Activated T-helper 2 cell treated with anti-CD3 and anti-CD28 coated beads, Interferon-gamma antibody, Interleukin-2, Interleukin-4, amounts not matched to agents 10 μg/mL and 5 μg/mL and 100 μg/mL, durations not matched to agents 14 hours and 24 hours and 36 hours (primary cell): ENCODE measurements at regions of chr2 and their contacts with region 1.

Region 1: GRCh38 chr2:103396152-103396551 is 634.3 kb downstream of the TMEM182 start:
- DNase-seq: no peak
- H3K4me3 Mint-ChIP-seq: no peak overlapping the region
- H3K27ac Mint-ChIP-seq: no peak overlapping the region
- H3K4me1 Mint-ChIP-seq: no peaks in the 10 kb centered on the region
- H3K27me3 Mint-ChIP-seq: no peaks in the 10 kb centered on the region

Region 2: DNA sequence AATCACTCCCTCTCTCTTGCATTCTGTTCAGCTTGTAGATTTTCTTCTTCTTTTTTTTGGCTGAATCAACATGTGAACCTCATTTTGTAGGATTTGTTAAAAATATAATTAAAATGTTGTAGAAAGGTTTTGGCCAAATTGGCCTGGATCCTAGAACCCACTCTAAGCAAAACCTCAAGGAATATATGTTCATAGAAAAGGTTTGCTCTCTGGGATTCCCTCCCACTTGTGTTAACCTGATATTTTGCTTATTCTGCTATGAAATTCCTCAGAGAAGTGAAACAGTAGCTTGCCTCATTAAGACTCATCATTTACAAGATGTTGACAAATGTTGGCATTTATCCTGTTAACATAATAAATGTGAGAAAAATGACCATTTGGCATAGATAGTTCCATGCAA is 177.6 kb before region 1 on chr2:
- intact Hi-C with region 1: no loop called
- DNase-seq: no peak
- H3K4me3 Mint-ChIP-seq: no peak overlapping the region
- H3K27ac Mint-ChIP-seq: no peak overlapping the region
- H3K4me1 Mint-ChIP-seq: no peaks in the 10 kb centered on the region
- H3K27me3 Mint-ChIP-seq: no peaks in the 10 kb centered on the region

Region 3: GRCh38 chr2:103335403-103335802 is 60.7 kb before region 1 on chr2:
- intact Hi-C with region 1: no loop called
- DNase-seq: no peak
- H3K4me3 Mint-ChIP-seq: no peak overlapping the region
- H3K27ac Mint-ChIP-seq: no peak overlapping the region
- H3K4me1 Mint-ChIP-seq: no peaks in the 10 kb centered on the region
- H3K27me3 Mint-ChIP-seq: no peaks in the 10 kb centered on the region

Region 4: GRCh38 chr2:103427567-103427966 is 31.4 kb after region 1 on chr2:
- intact Hi-C with region 1: loop called (anchors 5 kb)
- DNase-seq: no peak
- H3K4me3 Mint-ChIP-seq: no peak overlapping the region
- H3K27ac Mint-ChIP-seq: no peak overlapping the region
- H3K4me1 Mint-ChIP-seq: no peaks in the 10 kb centered on the region
- H3K27me3 Mint-ChIP-seq: no peaks in the 10 kb centered on the region

Region 5: DNA sequence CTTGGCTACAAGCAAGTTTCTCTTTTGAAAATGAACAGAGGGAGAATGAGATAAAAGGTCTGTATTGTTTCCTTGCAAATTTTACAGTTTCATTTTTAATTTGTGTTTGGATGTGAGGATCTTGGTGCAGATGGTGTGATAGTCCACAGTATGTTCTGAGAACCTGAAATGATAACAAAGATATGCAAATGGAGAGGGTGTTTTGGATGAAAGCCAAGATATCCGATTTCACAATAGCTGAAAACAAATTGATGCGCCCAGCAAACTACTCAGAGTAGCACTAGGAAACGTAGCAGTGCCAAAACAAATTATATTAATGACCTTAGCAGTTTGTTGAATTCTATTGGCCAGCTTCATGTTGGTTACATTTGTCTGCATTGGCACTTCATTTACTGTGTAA is 49.2 kb after region 1 on chr2:
- intact Hi-C with region 1: no loop called
- DNase-seq: no peak
- H3K4me3 Mint-ChIP-seq: no peak overlapping the region
- H3K27ac Mint-ChIP-seq: no peak overlapping the region
- H3K4me1 Mint-ChIP-seq: no peaks in the 10 kb centered on the region
- H3K27me3 Mint-ChIP-seq: no peaks in the 10 kb centered on the region